Activated CD4-positive, alpha-beta T cell treated with anti-CD3 and anti-CD28 coated beads for 36 hours (primary cell): ENCODE measurements at regions of chr11 and their contacts with region 1.

Region 1: DNA sequence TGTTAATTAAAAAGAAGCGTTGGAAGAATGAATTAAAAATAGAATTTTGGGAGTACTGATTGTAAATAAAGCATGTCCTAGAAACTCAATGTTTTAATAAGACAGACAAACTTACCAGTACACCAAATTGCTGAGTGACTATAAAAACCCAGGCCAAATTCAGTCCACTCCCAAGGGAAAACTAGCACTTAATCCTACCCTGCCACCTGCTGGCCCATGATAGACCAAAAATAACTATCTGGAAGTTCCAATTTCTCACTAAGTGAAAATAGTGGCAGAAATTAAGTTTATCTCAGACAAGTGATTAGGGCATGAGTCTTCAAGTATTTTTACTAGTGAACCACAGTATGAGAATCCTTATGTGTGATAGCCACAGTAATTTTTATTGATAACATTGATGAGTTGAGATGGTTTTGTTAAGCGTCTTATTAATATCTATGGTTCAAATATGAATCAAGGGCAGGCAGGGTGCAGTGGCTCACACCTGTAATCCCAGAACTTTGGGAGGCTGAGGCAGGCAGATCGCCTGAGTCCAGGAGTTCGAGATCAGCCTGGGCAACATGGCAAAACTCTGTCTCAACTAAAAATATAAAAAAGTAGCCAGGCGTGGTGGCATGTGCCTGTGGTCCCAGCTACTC is 9.8 kb upstream of the DDX10 start:
- DNase-seq: peak; percentile 60
- ATAC-seq: peak; percentile 39
- H3K4me3 Mint-ChIP-seq: no peak overlapping the region
- H3K27ac Mint-ChIP-seq: no peak overlapping the region
- H3K4me1 Mint-ChIP-seq: no peaks in the 10 kb centered on the region
- H3K27me3 Mint-ChIP-seq: peaks cover 3% of the 10 kb centered on the region

Region 2: GRCh38 chr11:107916671-107917241 is 738.4 kb before region 1 on chr11:
- CTCF ChIA-PET with region 1: no interaction called
- POLR2A ChIA-PET with region 1: no interaction called
- intact Hi-C with region 1: loop called in 1 of 2 experiments (anchors 1 kb)
- DNase-seq: peak; percentile 68
- ATAC-seq: peak; percentile 42
- H3K4me3 Mint-ChIP-seq: no peak overlapping the region
- H3K27ac Mint-ChIP-seq: no peak overlapping the region
- H3K4me1 Mint-ChIP-seq: no peaks in the 10 kb centered on the region
- H3K27me3 Mint-ChIP-seq: peaks cover 2% of the 10 kb centered on the region

Region 3: DNA sequence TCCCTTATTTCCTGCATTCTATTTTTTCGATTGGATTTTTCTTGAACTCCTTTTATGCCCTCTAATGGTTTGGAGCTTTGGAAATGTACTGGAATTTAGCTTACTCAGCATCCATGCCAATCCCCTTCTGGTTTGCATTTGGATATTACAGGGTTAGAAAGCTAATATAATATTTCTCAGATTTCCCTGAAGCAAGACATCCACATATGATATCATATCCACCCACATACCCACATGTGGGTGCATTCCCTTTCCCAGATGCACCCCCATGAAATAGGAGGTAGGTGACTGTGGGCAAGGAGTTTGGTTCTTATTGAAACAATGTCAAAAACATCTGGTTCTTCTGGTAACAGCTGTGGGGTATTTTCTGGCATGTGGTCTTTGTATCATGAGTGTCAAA is 23.1 kb before region 1 on chr11:
- CTCF ChIA-PET with region 1: no interaction called
- POLR2A ChIA-PET with region 1: no interaction called
- intact Hi-C with region 1: no loop called
- DNase-seq: no peak
- ATAC-seq: no peak
- H3K4me3 Mint-ChIP-seq: no peak overlapping the region
- H3K27ac Mint-ChIP-seq: no peak overlapping the region
- H3K4me1 Mint-ChIP-seq: no peaks in the 10 kb centered on the region
- H3K27me3 Mint-ChIP-seq: peaks cover 18% of the 10 kb centered on the region